AG04449 (cell line): ENCODE measurements at regions of chr5 and their contacts with region 1.

Region 1: GRCh38 chr5:15003511-15003920 is 131.9 kb upstream of the ANKH start:
- DNase-seq: no peak
- H3K4me3 ChIP-seq: no peak overlapping the region
- CTCF ChIP-seq: peak; percentile 70

Region 2: GRCh38 chr5:14664302-14665100 is 339.0 kb before region 1 on chr5 and contains the start of gene OTULIN:
- CTCF ChIA-PET with region 1: interaction called, 11 read pairs
- POLR2A ChIA-PET with region 1: no interaction called
- DNase-seq: no peak
- H3K4me3 ChIP-seq: peak within 1 kb of the TSS; percentile 88
- CTCF ChIP-seq: no peak

Region 3: DNA sequence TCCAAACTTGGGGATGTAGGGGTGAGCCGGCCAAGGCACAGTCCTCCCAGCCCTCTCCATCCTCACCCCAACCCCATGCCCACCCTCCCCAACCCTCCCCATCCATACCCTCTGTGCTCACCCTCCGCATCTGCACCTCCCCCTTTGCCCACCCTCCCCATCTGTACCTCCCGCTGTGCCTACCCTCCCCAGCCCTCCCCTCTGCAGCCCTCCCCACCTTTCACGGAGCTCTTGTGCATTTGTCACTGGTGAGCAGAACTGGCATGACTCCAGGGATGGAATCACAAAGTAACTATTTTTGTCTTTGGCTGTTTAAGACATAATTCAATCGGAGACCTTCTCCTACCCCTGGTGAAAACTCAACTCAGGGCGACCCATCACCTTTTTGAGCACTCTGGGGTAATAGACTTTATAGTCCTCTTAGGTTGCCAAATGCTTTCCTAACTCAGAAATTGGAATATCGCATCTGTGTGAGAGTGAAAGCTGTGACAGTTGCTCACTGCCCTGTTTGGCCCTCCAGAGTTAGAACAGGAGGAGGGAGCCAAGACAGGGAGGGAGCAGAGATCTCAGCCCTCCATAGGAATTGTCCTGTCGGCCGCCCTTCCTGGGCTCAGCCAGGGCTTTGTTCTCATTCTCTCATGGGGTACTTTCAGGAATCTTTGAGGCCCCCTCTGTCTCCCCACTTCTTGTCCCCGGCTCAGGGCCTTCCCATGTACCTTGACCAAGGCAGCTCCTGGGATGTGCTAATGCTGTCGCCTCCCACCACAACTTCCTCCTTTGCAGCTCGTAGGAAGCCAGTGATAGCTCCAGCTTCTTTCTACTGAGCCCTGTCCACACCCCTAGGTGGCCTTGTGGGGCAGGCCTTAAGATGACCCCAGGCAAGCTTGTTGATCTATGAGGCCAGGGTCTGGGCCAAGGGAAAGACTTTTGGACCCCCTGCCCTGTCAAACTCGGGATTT is 302.8 kb before region 1 on chr5:
- CTCF ChIA-PET with region 1: interaction called, 15 read pairs
- POLR2A ChIA-PET with region 1: no interaction called
- DNase-seq: no peak
- H3K4me3 ChIP-seq: no peak overlapping the region
- CTCF ChIP-seq: no peak

Region 4: DNA sequence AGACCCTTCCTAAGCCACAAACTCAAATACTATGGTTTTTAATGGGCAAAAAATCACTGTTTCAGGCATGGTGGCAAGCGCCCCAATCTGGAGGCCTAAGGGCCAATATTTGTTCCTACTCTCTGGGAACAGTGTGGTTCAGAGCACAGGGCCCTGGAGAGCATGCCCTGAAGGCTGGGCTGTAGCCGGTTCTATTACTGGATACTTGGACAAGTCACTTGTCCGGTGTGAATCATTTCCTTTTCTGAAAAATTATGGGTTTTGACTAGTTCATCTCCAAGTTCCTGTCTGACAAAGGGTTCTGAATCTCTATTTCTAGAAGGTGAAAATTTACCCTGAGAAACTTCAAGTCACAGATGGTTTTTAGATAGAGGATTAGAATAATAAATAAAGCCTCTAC is 264.0 kb before region 1 on chr5:
- CTCF ChIA-PET with region 1: interaction called, 36 read pairs
- POLR2A ChIA-PET with region 1: no interaction called
- DNase-seq: no peak
- H3K4me3 ChIP-seq: no peak overlapping the region
- CTCF ChIP-seq: no peak

Region 5: DNA sequence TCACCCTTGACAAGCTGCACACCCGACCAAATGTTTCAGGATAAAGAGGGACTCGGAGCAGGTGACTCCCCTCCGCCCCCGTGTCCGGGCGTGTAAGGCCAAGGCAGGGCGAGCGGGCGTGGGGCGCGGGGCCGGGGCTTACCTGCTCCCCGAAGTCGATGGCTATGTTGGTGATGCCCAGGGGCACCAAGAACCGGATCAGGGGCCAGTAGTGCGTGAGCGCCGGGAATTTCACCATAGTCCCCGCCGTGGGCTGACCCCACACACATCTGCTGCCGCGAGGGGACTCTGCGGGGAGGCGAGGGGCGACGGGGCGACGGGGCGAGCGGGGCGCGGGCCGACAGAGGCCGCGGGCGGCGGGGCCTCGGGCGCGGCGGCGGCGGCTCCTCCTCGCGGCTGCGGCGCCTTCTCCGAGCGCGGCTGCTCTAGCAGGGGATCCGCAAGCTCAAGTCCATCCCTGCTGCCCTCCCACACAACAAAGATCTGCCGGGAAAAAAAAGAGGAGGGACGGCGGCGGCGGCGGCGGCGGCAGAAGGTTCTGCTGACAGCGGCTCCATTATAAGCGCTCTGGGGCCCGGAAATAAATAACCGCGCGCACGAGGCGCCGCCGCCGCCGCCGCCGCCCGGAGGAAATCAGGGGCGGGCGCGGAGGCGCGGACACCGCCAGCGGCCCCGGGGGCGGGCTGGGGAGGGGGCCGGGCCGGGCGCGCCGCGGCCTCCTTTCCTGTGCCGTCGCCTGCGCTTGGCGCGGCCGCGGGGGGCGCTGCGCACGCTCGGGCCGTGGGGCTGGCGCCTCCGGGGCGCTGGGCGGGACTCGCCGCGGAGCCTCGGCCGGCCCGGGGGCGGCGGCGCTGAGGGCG is 132.1 kb before region 1 on chr5 and contains the start of gene ANKH:
- CTCF ChIA-PET with region 1: interaction called, 38 read pairs
- POLR2A ChIA-PET with region 1: interaction called, 5 read pairs
- DNase-seq: no peak
- H3K4me3 ChIP-seq: peak within 1 kb of the TSS; percentile 74
- CTCF ChIP-seq: peak; percentile 47

Region 6: GRCh38 chr5:14942212-14942611 is 61.3 kb before region 1 on chr5:
- CTCF ChIA-PET with region 1: interaction called, 11 read pairs
- POLR2A ChIA-PET with region 1: no interaction called
- DNase-seq: no peak
- H3K4me3 ChIP-seq: no peak overlapping the region
- CTCF ChIP-seq: no peak

Region 7: GRCh38 chr5:15013654-15014463 is 10.3 kb after region 1 on chr5:
- CTCF ChIA-PET with region 1: interaction called, 23 read pairs
- POLR2A ChIA-PET with region 1: no interaction called
- DNase-seq: no peak
- H3K4me3 ChIP-seq: no peak overlapping the region
- CTCF ChIP-seq: peak; percentile 32

Region 8: GRCh38 chr5:15037247-15037908 is 33.9 kb after region 1 on chr5:
- CTCF ChIA-PET with region 1: no interaction called
- POLR2A ChIA-PET with region 1: no interaction called
- DNase-seq: no peak
- H3K4me3 ChIP-seq: no peak overlapping the region
- CTCF ChIP-seq: no peak

Region 9: DNA sequence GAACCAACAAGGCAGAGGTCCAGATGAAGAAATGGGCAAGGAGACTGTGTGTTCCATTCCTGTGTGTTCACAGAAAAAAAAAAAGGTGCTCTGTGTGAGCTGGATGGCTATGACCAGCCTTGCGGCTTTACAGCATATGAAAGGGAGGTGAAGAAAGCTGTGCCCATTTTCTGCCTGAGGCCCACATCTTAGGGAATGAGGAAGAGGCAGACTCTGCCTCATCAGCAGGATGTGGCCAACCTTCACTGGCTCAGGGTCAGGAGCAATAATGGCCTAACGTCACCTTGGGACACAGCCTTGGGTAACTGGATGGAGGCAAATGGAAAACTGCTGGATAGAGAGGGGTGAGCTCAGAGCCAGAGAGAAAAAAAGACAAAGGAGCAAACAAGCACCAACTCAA is 167.8 kb after region 1 on chr5:
- CTCF ChIA-PET with region 1: no interaction called
- POLR2A ChIA-PET with region 1: no interaction called
- DNase-seq: no peak
- H3K4me3 ChIP-seq: no peak overlapping the region
- CTCF ChIP-seq: no peak